ENCODE measurements at regions of chr2 and their contacts with region 1.

Region 1: DNA sequence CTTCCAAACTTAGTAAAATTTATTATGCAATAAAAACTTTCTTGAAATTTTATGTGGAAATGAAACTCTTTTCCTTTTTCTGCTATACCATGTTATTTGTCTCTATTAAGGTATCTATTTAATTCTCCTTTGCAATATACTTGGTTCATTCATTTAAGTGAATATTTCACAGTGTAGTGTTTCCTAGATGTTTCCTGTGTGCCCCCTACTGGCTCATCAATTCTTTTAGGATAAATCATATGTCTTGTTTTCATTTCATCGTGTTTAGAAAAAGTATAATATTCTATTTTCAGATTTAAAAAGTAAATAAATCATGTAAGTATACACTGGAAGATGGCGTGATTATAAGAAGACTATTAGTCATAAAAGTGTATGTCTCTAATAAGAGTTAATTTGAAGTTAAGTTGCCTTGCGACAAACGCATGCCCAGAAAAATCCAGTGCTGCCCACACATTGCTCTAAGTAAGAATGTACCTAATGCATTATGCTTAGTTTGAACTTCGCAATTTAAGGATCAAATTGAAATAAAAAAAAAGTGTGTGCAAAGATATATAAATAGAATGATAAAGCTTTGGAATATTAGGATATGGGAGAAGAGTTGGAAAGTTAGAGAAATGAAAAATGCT is 525.4 kb downstream of the KCNJ3 start:
- DNase-seq: no peak
- H3K4me3 ChIP-seq: no peak overlapping the region
- H3K4me3 Mint-ChIP-seq: no peak overlapping the region
- H3K27ac Mint-ChIP-seq: no peak overlapping the region
- H3K4me1 ChIP-seq: no peaks in the 10 kb centered on the region
- H3K4me1 Mint-ChIP-seq: no peaks in the 10 kb centered on the region
- H3K27me3 ChIP-seq: no peaks in the 10 kb centered on the region
- H3K27me3 Mint-ChIP-seq: no peaks in the 10 kb centered on the region
- CTCF ChIP-seq: peak; percentile 39 to 50

Region 2: DNA sequence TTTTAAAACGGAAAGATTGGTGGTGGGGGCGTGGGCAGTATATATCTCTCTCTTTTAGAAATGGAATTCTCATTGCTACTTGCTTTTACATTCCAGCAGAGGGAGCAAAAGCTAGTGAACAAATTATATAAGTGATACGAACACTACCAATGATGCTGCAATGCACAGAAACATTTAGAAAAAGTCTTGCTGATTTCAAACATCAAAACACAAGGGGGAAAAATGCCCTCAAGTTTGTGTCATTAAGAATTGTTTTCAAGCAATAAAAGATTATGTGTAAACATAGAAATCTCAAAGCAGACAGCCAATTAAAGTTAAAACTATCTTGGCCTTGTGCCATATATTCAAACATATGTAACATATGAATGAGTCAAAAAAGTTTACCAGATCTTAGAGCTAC is 821.7 kb before region 1 on chr2:
- CTCF ChIA-PET with region 1: no interaction called
- POLR2A ChIA-PET with region 1: no interaction called
- intact Hi-C with region 1: loop called (anchors 1 kb)
- DNase-seq: peak in 1 of 2 experiments; percentile 3
- H3K4me3 ChIP-seq: no peak overlapping the region
- H3K4me3 Mint-ChIP-seq: no peak overlapping the region
- H3K27ac Mint-ChIP-seq: no peak overlapping the region
- H3K4me1 ChIP-seq: no peaks in the 10 kb centered on the region
- H3K4me1 Mint-ChIP-seq: peaks cover 6% of the 10 kb centered on the region
- H3K27me3 ChIP-seq: no peaks in the 10 kb centered on the region
- H3K27me3 Mint-ChIP-seq: peaks cover 5% of the 10 kb centered on the region
- CTCF ChIP-seq: peak in 1 of 2 experiments; percentile 60

Region 3: DNA sequence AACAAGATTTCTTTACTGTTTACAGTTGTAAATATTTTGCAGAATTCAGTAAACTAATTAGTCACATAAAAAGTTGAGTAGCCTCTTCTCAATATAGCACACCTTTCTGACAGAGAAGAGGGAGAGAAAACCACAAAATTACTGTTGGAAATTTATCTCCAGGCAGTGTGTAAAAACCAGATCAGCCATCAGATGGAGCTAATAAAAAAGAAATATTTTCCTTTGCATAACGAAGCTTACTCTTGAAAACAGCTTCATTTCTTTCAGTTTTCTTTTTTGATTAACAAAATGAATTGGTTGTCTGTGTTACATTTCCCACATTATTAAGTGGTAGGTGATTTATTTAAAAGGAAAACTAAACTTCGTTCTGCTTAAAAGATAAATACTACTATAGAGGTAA is 784.7 kb before region 1 on chr2:
- CTCF ChIA-PET with region 1: no interaction called
- POLR2A ChIA-PET with region 1: no interaction called
- intact Hi-C with region 1: loop called (anchors 2 kb)
- DNase-seq: no peak
- H3K4me3 ChIP-seq: no peak overlapping the region
- H3K4me3 Mint-ChIP-seq: no peak overlapping the region
- H3K27ac Mint-ChIP-seq: no peak overlapping the region
- H3K4me1 ChIP-seq: no peaks in the 10 kb centered on the region; the same call in 1 of the 2 replicates
- H3K4me1 Mint-ChIP-seq: no peaks in the 10 kb centered on the region
- H3K27me3 ChIP-seq: no peaks in the 10 kb centered on the region
- H3K27me3 Mint-ChIP-seq: no peaks in the 10 kb centered on the region
- CTCF ChIP-seq: peak in 1 of 2 experiments; percentile 30

Region 4: DNA sequence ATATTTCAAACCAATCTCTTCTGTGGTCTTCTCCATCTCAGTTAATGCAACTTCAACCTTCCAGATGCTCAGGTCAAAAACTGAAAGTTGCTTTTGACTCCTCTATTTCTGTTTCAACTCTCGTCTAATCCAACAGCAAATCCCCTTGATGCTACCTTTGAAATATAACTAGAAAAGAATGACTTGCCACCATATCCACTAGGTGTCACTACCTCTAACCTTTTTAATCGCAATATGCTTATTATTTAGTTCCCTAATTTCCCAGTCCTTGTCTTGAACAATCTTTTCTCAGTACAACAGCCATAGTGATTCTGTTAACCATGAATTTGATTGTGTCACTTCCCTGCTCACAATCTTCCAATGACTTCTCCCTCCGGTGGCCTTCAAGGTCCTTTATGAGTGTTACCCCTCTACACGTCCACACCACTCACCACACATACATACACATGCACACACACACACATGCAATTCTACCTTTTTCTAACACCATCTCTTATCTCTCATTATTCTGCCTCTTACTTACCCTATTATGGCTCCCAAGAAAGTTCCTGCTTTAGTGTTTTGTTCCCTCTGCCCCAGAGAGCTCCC is 770.9 kb before region 1 on chr2:
- CTCF ChIA-PET with region 1: no interaction called
- POLR2A ChIA-PET with region 1: no interaction called
- intact Hi-C with region 1: loop called (anchors 5 kb)
- DNase-seq: no peak
- H3K4me3 ChIP-seq: no peak overlapping the region
- H3K4me3 Mint-ChIP-seq: no peak overlapping the region
- H3K27ac Mint-ChIP-seq: no peak overlapping the region
- H3K4me1 ChIP-seq: peaks cover 29% of the 10 kb centered on the region
- H3K4me1 Mint-ChIP-seq: peaks cover 15% of the 10 kb centered on the region
- H3K27me3 ChIP-seq: no peaks in the 10 kb centered on the region
- H3K27me3 Mint-ChIP-seq: no peaks in the 10 kb centered on the region
- CTCF ChIP-seq: peak; percentile 7 to 16

Region 5: GRCh38 chr2:155250800-155251199 is 26.9 kb after region 1 on chr2:
- CTCF ChIA-PET with region 1: no interaction called
- POLR2A ChIA-PET with region 1: no interaction called
- intact Hi-C with region 1: no loop called
- DNase-seq: peak in 1 of 2 experiments; percentile 12
- H3K4me3 ChIP-seq: no peak overlapping the region
- H3K4me3 Mint-ChIP-seq: no peak overlapping the region
- H3K27ac Mint-ChIP-seq: no peak overlapping the region
- H3K4me1 ChIP-seq: no peaks in the 10 kb centered on the region
- H3K4me1 Mint-ChIP-seq: no peaks in the 10 kb centered on the region
- H3K27me3 ChIP-seq: no peaks in the 10 kb centered on the region
- H3K27me3 Mint-ChIP-seq: peaks cover 8% of the 10 kb centered on the region
- CTCF ChIP-seq: peak; percentile 17 to 24

Measured in Caco-2 (cell line).